ENCODE measurements at regions of chr2 and their contacts with region 1.

Region 1: GRCh38 chr2:38315707-38316333 is 61.3 kb downstream of the ATL2 start:
- DNase-seq: peak; percentile 67
- H3K4me3 ChIP-seq: no peak overlapping the region; a peak in 1 of 4 replicates
- H3K27ac ChIP-seq: no peak overlapping the region
- H3K4me1 ChIP-seq: no peaks in the 10 kb centered on the region; a peak in 1 of 4 replicates
- H3K27me3 ChIP-seq: no peaks in the 10 kb centered on the region
- CTCF ChIP-seq: peak; percentile 97
- EP300 ChIP-seq: no peak
- RAD21 ChIP-seq: peak; percentile 92

Region 2: GRCh38 chr2:38260469-38260868 is 55.4 kb before region 1 on chr2:
- CTCF ChIA-PET with region 1: no interaction called
- POLR2A ChIA-PET with region 1: no interaction called
- DNase-seq: no peak
- H3K4me3 ChIP-seq: no peak overlapping the region
- H3K27ac ChIP-seq: no peak overlapping the region
- H3K4me1 ChIP-seq: no peaks in the 10 kb centered on the region; a peak in 1 of 4 replicates
- H3K27me3 ChIP-seq: no peaks in the 10 kb centered on the region
- CTCF ChIP-seq: no peak
- EP300 ChIP-seq: no peak
- RAD21 ChIP-seq: no peak

Region 3: DNA sequence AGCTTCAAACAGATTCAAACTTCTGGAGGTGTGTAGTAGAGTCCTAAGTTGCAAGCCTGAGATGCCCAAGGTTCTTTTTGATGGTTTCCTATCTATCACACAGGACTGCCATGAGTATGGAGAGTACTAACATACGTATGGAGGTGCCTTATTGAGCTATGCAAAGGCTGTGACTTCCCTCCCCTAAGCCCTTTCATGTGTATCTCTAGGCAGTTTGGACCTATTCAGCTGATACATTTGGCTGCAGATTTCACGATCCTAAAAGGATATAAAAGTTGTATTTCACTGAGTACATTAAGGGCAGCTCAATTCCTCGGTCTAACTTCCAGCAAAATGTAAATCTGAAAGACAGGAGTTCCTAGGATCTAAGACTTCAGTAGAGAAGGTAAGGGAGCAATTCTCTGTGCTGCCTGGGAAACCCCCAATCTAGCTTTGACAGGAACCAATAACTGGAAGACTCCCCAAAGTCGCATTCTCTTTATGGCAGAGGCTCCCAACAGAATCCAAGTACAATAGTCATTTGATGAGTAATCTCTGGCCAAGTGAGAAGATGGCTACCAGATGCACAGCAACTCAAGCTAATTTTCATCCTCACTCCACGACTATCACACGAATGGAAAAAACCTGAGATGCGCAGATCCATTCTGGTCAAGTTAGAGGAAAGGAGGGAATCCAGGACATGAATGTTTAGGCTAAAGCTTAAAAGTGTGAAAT is 22.5 kb before region 1 on chr2:
- CTCF ChIA-PET with region 1: interaction called, 14 read pairs
- POLR2A ChIA-PET with region 1: no interaction called
- DNase-seq: no peak
- H3K4me3 ChIP-seq: no peak overlapping the region
- H3K27ac ChIP-seq: no peak overlapping the region
- H3K4me1 ChIP-seq: no peaks in the 10 kb centered on the region
- H3K27me3 ChIP-seq: no peaks in the 10 kb centered on the region
- CTCF ChIP-seq: no peak
- EP300 ChIP-seq: no peak
- RAD21 ChIP-seq: no peak

Region 4: DNA sequence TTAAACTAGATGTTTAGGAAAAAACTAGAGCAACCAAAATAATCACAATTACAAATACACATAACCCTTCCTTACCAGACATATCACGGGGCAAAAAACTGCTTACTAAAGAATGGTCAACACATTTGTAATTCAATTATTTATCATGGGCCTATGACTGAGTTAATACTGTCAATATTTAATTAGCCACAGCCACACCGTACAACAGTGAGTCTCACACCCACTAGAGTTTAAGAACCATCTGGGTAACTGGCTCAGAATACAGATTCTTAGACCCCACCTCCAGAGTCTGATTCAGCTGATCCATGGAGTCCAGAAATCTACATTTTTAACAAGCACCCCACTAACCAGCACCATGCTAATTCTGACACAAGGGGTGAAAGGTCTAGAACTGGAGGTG is 46.4 kb after region 1 on chr2:
- CTCF ChIA-PET with region 1: interaction called, 10 read pairs
- POLR2A ChIA-PET with region 1: no interaction called
- DNase-seq: no peak
- H3K4me3 ChIP-seq: no peak overlapping the region
- H3K27ac ChIP-seq: peak overlapping the region in 1 of 2 experiments; percentile 24; a peak in 1 of 4 replicates
- H3K4me1 ChIP-seq: peaks cover 2 to 9% of the 10 kb centered on the region in 2 experiments; a peak in 3 of 4 replicates
- H3K27me3 ChIP-seq: no peaks in the 10 kb centered on the region
- CTCF ChIP-seq: no peak
- EP300 ChIP-seq: no peak
- RAD21 ChIP-seq: no peak

Region 5: DNA sequence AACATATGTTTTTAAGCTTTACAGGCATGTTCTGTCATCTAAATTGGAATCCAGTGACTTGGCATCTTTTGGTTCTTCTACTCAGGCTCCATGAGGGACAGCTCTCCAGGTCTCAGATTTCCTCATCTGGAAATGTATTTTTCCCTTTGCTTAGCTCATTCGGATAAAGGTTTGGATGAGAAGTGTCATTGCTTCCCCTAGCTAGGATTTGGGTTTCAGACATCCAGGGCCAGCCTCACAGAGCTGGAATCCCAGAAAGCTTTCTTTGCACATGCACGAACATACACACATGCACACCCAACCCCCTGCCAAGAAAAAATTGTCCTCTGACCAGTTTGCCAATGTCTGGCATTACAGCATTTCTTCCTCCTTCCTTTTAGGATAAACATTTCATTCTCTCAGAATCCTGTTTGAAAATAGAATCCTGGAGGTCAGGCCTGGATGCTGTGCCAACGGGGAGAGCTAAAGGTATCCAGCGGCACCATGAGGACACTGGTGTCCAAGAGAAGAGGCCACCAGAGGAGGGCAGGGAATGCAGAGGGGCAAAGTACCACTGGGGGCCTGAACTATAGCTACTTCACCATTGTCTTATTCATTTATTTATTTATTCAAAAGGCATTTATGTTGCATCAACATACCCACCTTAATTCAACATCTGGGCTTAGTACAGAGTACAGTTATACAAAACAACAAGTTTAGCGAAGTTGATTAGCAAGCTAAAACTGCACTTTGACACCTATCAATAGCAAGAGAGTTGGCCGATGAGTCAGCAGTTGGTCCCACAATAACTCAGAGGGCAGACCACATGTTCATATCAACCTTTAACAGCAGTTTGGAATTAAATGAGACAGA is 159.1 kb after region 1 on chr2:
- CTCF ChIA-PET with region 1: interaction called, 16 read pairs
- POLR2A ChIA-PET with region 1: no interaction called
- DNase-seq: no peak
- H3K4me3 ChIP-seq: no peak overlapping the region
- H3K27ac ChIP-seq: no peak overlapping the region
- H3K4me1 ChIP-seq: no peaks in the 10 kb centered on the region; a peak in 1 of 4 replicates
- H3K27me3 ChIP-seq: no peaks in the 10 kb centered on the region; the same call in 1 of the 2 replicates
- CTCF ChIP-seq: no peak
- EP300 ChIP-seq: no peak
- RAD21 ChIP-seq: no peak

Region 6: DNA sequence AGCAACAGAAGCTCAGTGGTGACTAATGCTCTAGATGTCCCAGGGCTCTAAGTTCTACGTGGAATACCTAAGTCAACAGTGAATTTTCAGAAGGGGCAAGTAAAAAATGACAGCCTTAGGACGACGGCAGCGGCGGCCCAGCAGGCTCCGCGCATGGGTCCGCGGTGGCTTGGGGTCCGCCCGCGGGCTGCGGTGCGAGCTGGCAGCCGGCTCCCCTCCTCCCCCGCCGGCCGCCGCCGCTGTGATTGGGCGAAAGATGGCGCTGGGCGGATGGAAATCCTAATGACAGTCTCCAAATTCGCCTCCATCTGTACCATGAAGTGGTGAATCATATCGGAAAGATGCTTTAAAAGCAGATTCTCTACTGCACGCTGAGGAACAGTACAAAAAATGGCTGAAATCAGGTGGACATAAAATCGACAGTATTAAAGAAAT is 212.2 kb after region 1 on chr2:
- CTCF ChIA-PET with region 1: interaction called, 21 read pairs
- POLR2A ChIA-PET with region 1: no interaction called
- DNase-seq: peak; percentile 96
- H3K4me3 ChIP-seq: peak overlapping the region; percentile 50 to 58
- H3K27ac ChIP-seq: peak overlapping the region; percentile 58 to 74
- H3K4me1 ChIP-seq: peaks cover 0 to 2% of the 10 kb centered on the region in 2 experiments; a peak in 2 of 4 replicates
- H3K27me3 ChIP-seq: no peaks in the 10 kb centered on the region
- CTCF ChIP-seq: no peak
- EP300 ChIP-seq: no peak; a peak in 1 of 4 replicates
- RAD21 ChIP-seq: peak; percentile 47

Region 7: DNA sequence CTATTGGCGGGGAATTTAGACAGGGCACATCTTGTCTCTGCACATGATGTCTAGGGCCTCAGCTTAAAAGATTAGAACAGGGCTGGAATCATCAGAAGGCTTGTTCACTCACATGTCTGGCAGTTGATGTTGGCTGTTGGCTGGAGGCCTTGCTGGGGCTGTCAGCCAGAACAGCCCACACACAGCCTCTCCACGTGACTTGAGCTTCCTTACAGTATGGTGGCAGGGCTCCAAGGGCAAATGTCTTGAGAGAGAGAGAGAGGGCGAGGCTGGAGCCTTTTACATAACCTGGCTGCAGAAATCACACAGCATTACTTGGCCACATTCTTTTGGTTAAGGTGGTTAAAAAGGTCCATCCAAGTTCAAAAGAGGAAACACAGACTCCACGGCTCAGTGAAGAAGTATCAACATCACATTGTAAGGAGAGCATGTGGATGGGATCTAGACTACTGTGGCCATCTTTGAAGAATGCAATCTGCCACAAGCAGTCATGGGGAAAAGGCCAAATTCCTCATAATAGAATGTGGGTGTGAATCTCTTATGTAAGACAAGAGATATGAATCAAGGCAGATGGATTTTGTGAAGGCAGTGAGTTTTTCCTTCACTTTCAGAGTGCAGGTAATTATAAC is 404.9 kb after region 1 on chr2:
- CTCF ChIA-PET with region 1: interaction called, 14 read pairs
- POLR2A ChIA-PET with region 1: no interaction called
- DNase-seq: no peak
- H3K4me3 ChIP-seq: no peak overlapping the region
- H3K27ac ChIP-seq: peak overlapping the region in 1 of 2 experiments; percentile 3; a peak in 1 of 4 replicates
- H3K4me1 ChIP-seq: no peaks in the 10 kb centered on the region
- H3K27me3 ChIP-seq: no peaks in the 10 kb centered on the region
- CTCF ChIP-seq: no peak
- EP300 ChIP-seq: no peak
- RAD21 ChIP-seq: no peak

Measured in SK-N-SH (cell line).